Activated CD8-positive, alpha-beta T cell treated with anti-CD3 and anti-CD28 coated beads for 36 hours (primary cell): ENCODE measurements at regions of chr13 and their contacts with region 1.

Region 1: GRCh38 chr13:50911937-50912795 is 2.6 kb downstream of the RNASEH2B start:
- DNase-seq: peak; percentile 98
- ATAC-seq: peak; percentile 70
- H3K4me3 Mint-ChIP-seq: peak overlapping the region; percentile 96
- H3K27ac Mint-ChIP-seq: peak overlapping the region; percentile 98
- H3K4me1 Mint-ChIP-seq: peaks cover 52% of the 10 kb centered on the region
- H3K27me3 Mint-ChIP-seq: no peaks in the 10 kb centered on the region
- CTCF ChIP-seq: peak; percentile 80

Region 2: GRCh38 chr13:49976314-49977258 is 935.6 kb before region 1 on chr13:
- CTCF ChIA-PET with region 1: interaction called, 27 read pairs
- POLR2A ChIA-PET with region 1: no interaction called
- intact Hi-C with region 1: loop called (anchors 2 kb)
- DNase-seq: peak; percentile 83
- ATAC-seq: peak; percentile 85
- H3K4me3 Mint-ChIP-seq: no peak overlapping the region
- H3K27ac Mint-ChIP-seq: no peak overlapping the region
- H3K4me1 Mint-ChIP-seq: peaks cover 2% of the 10 kb centered on the region
- H3K27me3 Mint-ChIP-seq: no peaks in the 10 kb centered on the region
- CTCF ChIP-seq: peak; percentile 89

Region 3: GRCh38 chr13:50081679-50082425 is 830.3 kb before region 1 on chr13:
- CTCF ChIA-PET with region 1: interaction called, 17 read pairs
- POLR2A ChIA-PET with region 1: interaction called, 4 read pairs
- intact Hi-C with region 1: loop called (anchors 5 kb)
- DNase-seq: peak; percentile 99
- ATAC-seq: peak; percentile 81
- H3K4me3 Mint-ChIP-seq: peak overlapping the region; percentile 93
- H3K27ac Mint-ChIP-seq: peak overlapping the region; percentile 98
- H3K4me1 Mint-ChIP-seq: peaks cover 28% of the 10 kb centered on the region
- H3K27me3 Mint-ChIP-seq: peaks cover 5% of the 10 kb centered on the region
- CTCF ChIP-seq: no peak

Region 4: DNA sequence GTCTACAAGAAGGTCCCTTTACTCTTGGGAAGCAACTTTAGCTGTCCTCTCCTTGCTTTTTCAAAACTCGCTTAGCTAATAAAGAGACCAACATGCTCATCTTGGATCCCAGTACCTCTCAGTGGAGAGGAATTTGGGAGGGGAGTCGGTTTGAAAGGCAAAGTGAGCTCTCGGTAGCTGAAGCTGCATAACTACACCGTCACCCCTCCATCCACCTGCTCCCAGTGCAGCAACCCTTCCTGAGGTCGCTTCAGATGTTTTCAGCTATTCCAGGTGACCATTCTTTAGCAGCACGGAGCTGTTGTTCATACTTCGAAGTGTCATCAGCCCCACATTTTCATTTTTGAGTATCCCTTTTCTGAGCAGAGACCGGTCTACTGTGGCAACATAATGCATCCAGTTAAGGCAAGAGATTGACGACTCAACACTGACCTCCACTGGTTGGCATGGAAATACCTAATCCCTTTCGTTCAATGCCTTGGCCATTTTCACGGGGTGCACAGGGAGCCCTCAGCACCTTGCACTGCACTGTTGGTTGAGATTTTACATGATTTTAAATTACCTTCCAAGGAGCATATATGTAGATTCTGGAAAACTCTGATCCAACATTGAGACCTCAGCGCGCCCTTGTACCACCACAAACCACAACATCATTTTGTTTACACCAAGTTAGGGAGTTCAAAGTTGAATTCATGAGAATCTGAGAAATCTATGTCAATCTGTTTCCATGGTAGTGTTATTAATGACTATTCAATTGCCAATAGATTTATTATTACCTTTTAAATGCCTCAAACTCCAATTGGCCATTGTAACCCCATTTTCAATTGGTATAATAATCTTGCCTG is 110.9 kb before region 1 on chr13:
- CTCF ChIA-PET with region 1: interaction called, 16 read pairs
- POLR2A ChIA-PET with region 1: no interaction called
- intact Hi-C with region 1: loop called (anchors 5 kb)
- DNase-seq: peak; percentile 71
- ATAC-seq: peak; percentile 98
- H3K4me3 Mint-ChIP-seq: no peak overlapping the region
- H3K27ac Mint-ChIP-seq: no peak overlapping the region
- H3K4me1 Mint-ChIP-seq: peaks cover 9% of the 10 kb centered on the region
- H3K27me3 Mint-ChIP-seq: no peaks in the 10 kb centered on the region
- CTCF ChIP-seq: peak; percentile 71

Region 5: GRCh38 chr13:50893211-50893852 is 18.8 kb before region 1 on chr13:
- CTCF ChIA-PET with region 1: interaction called, 78 read pairs
- POLR2A ChIA-PET with region 1: interaction called, 55 read pairs
- intact Hi-C with region 1: no loop called
- DNase-seq: peak; percentile 42
- ATAC-seq: peak; percentile 90
- H3K4me3 Mint-ChIP-seq: peak overlapping the region; percentile 67
- H3K27ac Mint-ChIP-seq: peak overlapping the region; percentile 94
- H3K4me1 Mint-ChIP-seq: peaks cover 28% of the 10 kb centered on the region
- H3K27me3 Mint-ChIP-seq: no peaks in the 10 kb centered on the region
- CTCF ChIP-seq: no peak

Region 6: DNA sequence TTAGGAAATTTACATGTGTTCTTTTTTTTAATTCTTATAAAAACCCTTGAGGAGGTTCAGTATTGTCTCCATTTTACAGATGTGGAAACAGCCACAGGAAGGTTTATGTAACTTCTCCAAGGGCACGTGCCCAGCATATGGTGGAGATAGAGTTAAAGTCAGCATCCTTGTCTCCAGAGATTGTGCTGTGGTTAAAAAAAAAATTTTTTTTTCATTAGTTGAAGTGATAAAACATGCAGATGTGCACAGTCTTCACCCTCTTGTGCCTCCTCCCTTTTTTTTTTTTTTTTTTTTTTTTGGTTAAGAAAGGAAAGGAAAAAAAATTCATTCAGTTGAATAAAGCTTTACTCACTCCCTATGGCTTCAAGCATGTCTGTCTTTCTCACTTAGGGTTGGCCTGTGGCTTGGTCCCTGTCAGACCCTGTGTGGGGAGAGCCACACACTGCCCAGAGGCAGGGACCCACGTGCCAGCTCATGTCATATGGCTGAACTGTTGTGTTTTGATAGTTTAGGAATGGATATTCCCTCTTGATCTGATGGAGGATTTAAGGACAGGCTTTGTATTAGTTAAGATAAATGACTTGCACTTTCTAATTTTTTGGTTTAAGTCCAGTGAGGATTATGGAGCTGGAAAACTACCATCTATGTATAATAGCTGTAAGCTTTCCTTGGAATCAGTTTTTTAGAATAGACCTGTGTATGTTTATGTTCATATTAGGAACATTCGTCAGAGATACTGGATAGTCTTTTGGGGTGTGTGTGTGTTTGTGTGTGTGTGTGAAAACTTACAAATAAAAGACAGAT is 16.7 kb after region 1 on chr13:
- CTCF ChIA-PET with region 1: interaction called, 17 read pairs
- POLR2A ChIA-PET with region 1: no interaction called
- intact Hi-C with region 1: no loop called
- DNase-seq: no peak
- ATAC-seq: no peak
- H3K4me3 Mint-ChIP-seq: no peak overlapping the region
- H3K27ac Mint-ChIP-seq: no peak overlapping the region
- H3K4me1 Mint-ChIP-seq: peaks cover 26% of the 10 kb centered on the region
- H3K27me3 Mint-ChIP-seq: no peaks in the 10 kb centered on the region
- CTCF ChIP-seq: no peak

Region 7: GRCh38 chr13:50979187-50979586 is 67.0 kb after region 1 on chr13:
- CTCF ChIA-PET with region 1: no interaction called
- POLR2A ChIA-PET with region 1: no interaction called
- intact Hi-C with region 1: no loop called
- DNase-seq: no peak
- ATAC-seq: no peak
- H3K4me3 Mint-ChIP-seq: no peak overlapping the region
- H3K27ac Mint-ChIP-seq: no peak overlapping the region
- H3K4me1 Mint-ChIP-seq: no peaks in the 10 kb centered on the region
- H3K27me3 Mint-ChIP-seq: no peaks in the 10 kb centered on the region
- CTCF ChIP-seq: no peak